B cell (primary cell): ENCODE measurements at regions of chr6 and their contacts with region 1.

Region 1: DNA sequence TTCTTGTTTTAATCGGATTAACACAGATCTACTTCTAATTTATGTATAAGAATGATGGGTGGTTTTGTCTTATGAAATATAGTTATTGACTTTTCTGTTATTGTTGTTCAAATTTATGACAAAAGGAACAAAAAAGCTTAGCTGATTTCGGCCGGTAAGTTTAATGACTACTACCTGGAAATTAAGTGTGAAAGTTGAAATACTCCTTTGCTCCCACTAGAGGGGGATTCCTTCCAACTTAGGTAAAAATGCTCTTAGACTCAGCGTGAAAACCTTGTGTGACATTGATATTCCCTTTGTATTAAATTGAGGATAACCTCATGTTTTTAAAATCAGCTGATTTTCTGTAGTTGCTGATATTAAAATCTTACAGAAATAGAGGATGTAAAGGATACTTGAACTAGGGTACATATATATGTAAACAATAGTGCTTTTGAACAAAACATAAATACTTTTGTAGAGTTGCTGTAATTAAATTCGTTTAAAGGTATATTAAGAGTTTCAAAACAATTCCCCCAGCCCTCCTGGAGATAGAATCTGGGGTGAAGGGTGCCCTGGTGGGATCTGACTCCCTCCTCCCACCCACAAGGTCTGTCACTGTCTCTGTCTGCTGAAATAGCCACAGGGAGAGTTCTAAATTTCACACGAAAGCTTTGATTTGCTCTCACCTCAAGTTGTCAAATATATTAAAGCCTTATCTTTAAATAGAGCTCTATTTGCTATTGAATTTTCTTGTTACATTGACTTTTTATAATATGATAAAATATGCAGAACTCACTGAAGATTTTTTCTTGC is 257.5 kb downstream of the ARID1B start:
- DNase-seq: peak; percentile 64
- ATAC-seq: peak; percentile 60
- H3K4me3 ChIP-seq: no peak overlapping the region
- H3K4me3 Mint-ChIP-seq: peak overlapping the region; percentile 55
- H3K27ac ChIP-seq: peak overlapping the region in 1 of 2 donors; percentile 80
- H3K27ac Mint-ChIP-seq: peak overlapping the region; percentile 2
- H3K4me1 ChIP-seq: peaks cover 13 to 25% of the 10 kb centered on the region in 2 donors
- H3K4me1 Mint-ChIP-seq: peaks cover 33% of the 10 kb centered on the region
- H3K27me3 ChIP-seq: no peaks in the 10 kb centered on the region
- H3K27me3 Mint-ChIP-seq: no peaks in the 10 kb centered on the region
- CTCF ChIP-seq: peak; percentile 85

Region 2: GRCh38 chr6:155327326-155328073 is 1707.1 kb before region 1 on chr6:
- CTCF ChIA-PET with region 1: no interaction called
- POLR2A ChIA-PET with region 1: no interaction called
- intact Hi-C with region 1: loop called (anchors 10 kb)
- DNase-seq: peak; percentile 75
- ATAC-seq: peak; percentile 39
- H3K4me3 ChIP-seq: no peak overlapping the region
- H3K4me3 Mint-ChIP-seq: no peak overlapping the region
- H3K27ac ChIP-seq: no peak overlapping the region
- H3K27ac Mint-ChIP-seq: no peak overlapping the region
- H3K4me1 ChIP-seq: no peaks in the 10 kb centered on the region
- H3K4me1 Mint-ChIP-seq: peaks cover 3% of the 10 kb centered on the region
- H3K27me3 ChIP-seq: no peaks in the 10 kb centered on the region
- H3K27me3 Mint-ChIP-seq: no peaks in the 10 kb centered on the region
- CTCF ChIP-seq: peak; percentile 94

Region 3: DNA sequence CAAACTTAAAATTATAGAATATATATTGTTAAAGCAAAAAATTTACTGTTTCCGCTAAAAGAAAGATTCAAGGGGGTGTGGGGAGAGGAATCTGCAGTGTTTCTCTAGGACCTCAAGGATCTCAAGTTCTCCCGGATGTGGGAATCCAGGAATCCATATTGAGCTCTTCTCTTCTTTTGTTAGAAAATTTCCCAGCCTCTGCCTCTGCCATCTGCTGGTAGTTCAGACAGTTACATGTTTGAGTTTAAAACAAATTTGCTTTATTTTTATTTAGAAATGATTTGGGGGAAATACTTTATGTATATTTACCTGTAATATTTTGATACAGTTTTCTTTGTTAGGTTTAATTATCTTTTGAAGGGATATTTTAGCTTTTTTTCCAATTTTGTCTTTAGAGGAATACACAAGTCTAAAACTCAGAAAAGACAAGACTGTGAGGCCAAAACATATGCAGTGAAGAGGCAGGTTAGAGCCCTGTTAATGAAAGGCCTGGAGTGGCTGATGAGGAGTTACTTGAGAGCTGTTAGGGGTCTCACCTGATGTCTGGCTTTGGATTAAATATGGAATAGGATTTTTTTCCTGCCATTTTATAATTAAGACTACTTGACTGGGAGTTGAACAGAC is 11.3 kb after region 1 on chr6:
- CTCF ChIA-PET with region 1: interaction called, 30 read pairs
- POLR2A ChIA-PET with region 1: no interaction called
- intact Hi-C with region 1: no loop called
- DNase-seq: no peak
- ATAC-seq: no peak
- H3K4me3 ChIP-seq: no peak overlapping the region
- H3K4me3 Mint-ChIP-seq: no peak overlapping the region
- H3K27ac ChIP-seq: peak overlapping the region in 1 of 2 donors; percentile 14
- H3K27ac Mint-ChIP-seq: no peak overlapping the region
- H3K4me1 ChIP-seq: peaks cover 7% of the 10 kb centered on the region in 2 donors
- H3K4me1 Mint-ChIP-seq: peaks cover 38% of the 10 kb centered on the region
- H3K27me3 ChIP-seq: no peaks in the 10 kb centered on the region
- H3K27me3 Mint-ChIP-seq: no peaks in the 10 kb centered on the region
- CTCF ChIP-seq: peak; percentile 67

Region 4: DNA sequence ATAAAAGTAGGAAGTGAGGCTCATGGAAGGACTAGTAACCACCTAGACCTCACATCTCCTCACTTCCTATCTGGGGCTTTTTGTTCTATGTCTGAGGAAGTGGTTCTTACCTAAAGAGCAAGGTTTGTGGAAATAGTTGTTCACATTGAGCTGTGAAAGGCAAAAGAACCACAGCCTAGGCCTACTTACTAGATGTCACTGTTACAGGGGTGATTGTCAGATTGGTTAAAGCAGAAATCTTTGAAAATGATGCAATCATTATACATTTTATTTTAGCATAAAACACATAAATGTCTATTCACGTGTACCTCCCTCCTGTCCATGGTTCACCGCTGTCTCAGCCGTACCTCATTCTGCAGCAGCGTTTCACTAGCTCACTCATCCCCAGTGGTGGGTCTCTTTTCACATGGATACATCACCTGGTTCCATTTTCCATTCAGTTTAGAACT is 19.9 kb after region 1 on chr6:
- CTCF ChIA-PET with region 1: interaction called, 12 read pairs
- POLR2A ChIA-PET with region 1: no interaction called
- intact Hi-C with region 1: no loop called
- DNase-seq: peak; percentile 76
- ATAC-seq: peak; percentile 90
- H3K4me3 ChIP-seq: no peak overlapping the region
- H3K4me3 Mint-ChIP-seq: peak overlapping the region; percentile 27
- H3K27ac ChIP-seq: peak overlapping the region; percentile 42 to 81
- H3K27ac Mint-ChIP-seq: peak overlapping the region; percentile 73
- H3K4me1 ChIP-seq: peaks cover 17 to 24% of the 10 kb centered on the region in 2 donors
- H3K4me1 Mint-ChIP-seq: peaks cover 53% of the 10 kb centered on the region
- H3K27me3 ChIP-seq: no peaks in the 10 kb centered on the region
- H3K27me3 Mint-ChIP-seq: no peaks in the 10 kb centered on the region
- CTCF ChIP-seq: no peak

Region 5: DNA sequence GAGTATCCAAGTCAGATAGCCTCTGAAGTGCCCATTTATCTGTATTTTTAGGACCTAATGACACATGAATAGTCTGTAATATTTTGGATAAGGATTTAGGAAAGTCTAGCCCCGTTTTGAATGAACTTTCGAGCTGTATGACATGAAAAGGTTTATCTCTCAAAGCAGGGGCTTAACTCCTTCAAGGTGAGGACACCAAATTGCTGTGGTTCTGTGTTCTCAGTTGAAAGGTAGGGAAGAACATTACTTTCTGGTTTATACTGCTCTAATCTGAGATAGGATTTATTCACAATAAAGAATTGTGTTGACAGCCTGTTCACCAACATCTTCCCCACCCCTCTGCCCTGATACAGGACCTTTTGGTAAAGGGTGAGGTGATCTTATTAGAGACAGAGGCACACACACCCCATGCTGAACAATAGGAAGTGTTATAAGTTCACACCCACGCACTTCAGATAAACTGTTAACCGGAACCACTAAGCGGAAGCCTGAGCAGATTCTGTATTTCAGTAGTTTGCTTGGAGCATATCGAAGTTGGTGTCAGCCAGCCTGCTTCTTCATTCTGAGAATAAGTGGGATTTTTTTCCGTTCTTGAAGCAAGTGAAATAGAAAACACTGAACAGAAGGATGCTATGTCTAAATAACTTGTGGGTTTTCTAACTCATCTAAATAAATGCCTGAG is 65.4 kb after region 1 on chr6:
- CTCF ChIA-PET with region 1: interaction called, 3 read pairs
- POLR2A ChIA-PET with region 1: no interaction called
- intact Hi-C with region 1: loop called (anchors 5 kb)
- DNase-seq: peak; percentile 76
- ATAC-seq: peak; percentile 95
- H3K4me3 ChIP-seq: peak overlapping the region in 1 of 5 experiments; percentile 13
- H3K4me3 Mint-ChIP-seq: peak overlapping the region; percentile 70
- H3K27ac ChIP-seq: peak overlapping the region; percentile 40 to 76
- H3K27ac Mint-ChIP-seq: peak overlapping the region; percentile 87
- H3K4me1 ChIP-seq: peaks cover 33 to 35% of the 10 kb centered on the region in 2 donors
- H3K4me1 Mint-ChIP-seq: peaks cover 54% of the 10 kb centered on the region
- H3K27me3 ChIP-seq: no peaks in the 10 kb centered on the region
- H3K27me3 Mint-ChIP-seq: no peaks in the 10 kb centered on the region
- CTCF ChIP-seq: no peak

Region 6: DNA sequence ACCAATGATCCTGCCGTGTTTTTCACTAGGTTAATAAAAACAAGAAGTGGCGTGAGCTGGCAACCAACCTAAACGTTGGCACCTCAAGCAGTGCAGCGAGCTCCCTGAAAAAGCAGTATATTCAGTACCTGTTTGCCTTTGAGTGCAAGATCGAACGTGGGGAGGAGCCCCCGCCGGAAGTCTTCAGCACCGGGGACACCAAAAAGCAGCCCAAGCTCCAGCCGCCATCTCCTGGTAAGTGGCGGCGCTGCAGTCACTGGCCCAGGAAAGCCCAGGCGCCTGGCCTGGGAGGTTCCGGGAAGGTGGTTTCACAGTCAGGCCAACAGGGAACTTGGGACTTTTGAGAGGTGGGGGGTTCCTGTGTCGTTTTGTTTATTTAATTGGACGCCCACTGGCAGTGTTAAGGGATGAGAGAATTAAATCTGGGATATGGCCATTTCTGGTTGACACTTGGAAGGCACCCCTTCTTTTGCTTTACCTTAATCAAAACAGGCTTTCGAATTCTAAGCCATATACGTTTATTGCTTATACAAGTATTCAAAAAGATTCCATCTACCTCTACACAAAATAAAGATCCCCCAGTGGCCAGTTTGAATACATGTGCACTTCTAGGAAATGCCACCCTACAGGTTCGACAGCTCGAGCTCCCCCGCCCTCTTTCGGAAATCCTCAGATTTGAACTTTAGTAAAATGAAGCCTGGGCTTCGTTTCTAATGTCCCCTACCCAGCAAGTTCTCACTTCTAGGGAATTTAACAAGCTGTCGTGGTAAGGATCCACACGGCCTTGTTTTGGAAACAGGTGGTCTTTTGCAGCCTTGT is 149.8 kb after region 1 on chr6:
- CTCF ChIA-PET with region 1: interaction called, 12 read pairs
- POLR2A ChIA-PET with region 1: no interaction called
- intact Hi-C with region 1: loop called (anchors 1 kb)
- DNase-seq: peak; percentile 51
- ATAC-seq: no peak
- H3K4me3 ChIP-seq: no peak overlapping the region
- H3K4me3 Mint-ChIP-seq: no peak overlapping the region
- H3K27ac ChIP-seq: no peak overlapping the region
- H3K27ac Mint-ChIP-seq: no peak overlapping the region
- H3K4me1 ChIP-seq: no peaks in the 10 kb centered on the region
- H3K4me1 Mint-ChIP-seq: peaks cover 2% of the 10 kb centered on the region
- H3K27me3 ChIP-seq: no peaks in the 10 kb centered on the region
- H3K27me3 Mint-ChIP-seq: no peaks in the 10 kb centered on the region
- CTCF ChIP-seq: peak; percentile 76